ENCODE measurements at regions of chr5 and their contacts with region 1.

Region 1: DNA sequence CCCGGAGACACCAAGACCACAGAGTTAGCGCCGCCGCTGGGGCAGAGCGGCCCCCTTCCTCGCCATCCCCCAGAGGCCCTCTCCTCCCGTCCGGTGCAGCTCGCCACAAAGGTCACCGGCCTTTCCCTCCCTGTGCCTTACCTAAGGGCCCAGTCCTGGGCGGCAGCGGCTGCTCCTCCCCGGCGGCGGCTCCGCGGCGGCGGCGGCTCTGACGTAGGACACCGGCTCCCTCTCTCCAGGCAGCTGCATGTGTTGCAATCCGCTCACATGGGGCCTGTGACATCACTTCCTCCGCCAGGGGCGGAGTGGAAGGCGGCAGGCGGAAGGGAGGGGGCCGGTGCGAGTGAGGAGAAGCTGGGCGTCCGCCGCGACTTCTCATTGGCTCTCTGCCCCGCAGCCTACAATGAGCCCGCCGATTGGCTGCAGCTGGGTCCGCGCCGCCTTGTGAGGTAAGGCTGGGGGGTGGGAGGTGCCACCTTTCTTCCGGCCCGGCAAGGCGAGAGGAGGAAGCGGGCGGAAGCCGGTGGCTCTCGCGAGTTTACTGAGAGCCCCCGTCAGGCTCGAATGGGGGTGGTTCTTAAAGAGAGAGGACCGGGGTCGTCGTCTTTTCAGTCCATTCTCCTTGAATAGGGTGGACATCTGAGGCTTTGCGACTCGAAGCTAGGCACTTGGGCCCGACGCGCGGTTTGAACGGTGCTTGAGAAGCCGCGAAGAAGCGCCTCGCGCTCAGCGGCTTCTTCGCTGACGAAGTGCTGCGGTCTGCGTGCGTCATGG is at the start of gene ETF1:
- DNase-seq: peak; percentile 100
- H3K4me3 Mint-ChIP-seq: peak within 1 kb of the TSS; percentile 96
- H3K27ac Mint-ChIP-seq: peak within 1 kb of the TSS; percentile 99
- H3K4me1 Mint-ChIP-seq: peaks cover 64% of the 10 kb centered on the region
- H3K27me3 Mint-ChIP-seq: no peaks in the 10 kb centered on the region
- total RNA-seq, gene ETF1: 77.5 to 81.7 TPM

Region 2: DNA sequence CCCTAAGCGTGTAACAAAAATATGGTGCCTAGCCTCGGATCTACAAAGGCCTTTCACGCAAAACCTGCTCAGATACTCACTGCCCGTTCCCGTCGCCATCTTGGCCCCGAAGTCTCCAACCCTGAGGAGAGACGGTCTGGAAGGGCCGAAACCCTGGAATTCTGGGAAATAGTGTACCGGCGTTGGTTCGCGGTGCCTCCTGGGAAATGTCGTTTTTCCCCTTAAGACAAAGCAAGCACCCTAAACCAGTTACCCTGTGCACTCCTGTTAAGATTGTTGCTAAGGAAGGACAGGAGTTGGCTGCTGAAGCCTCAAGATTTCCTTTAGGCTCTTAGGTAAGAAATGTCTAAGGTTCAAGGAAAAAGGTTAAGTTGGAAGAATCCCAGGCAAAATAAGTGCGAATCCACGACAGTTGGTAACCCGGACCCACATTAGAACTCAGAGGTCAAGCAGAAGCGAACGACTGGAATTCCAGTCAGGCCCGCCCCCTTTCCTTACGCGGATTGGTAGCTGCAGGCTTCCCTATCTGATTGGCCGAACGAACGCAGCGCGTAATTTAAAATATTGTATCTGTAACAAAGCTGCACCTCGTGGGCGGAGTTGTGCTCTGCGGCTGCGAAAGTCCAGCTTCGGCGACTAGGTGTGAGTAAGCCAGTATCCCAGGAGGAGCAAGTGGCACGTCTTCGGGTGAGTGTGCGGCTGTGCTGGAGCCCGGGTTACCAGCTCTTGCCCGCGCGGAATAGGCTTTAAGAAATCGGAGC is 364.4 kb before region 1 on chr5 and contains the starts of genes BRD8 and KIF20A:
- CTCF ChIA-PET with region 1: no interaction called
- POLR2A ChIA-PET with region 1: interaction called, 24 read pairs
- DNase-seq: peak; percentile 94
- H3K4me3 Mint-ChIP-seq: no peak within 1 kb of the TSS
- H3K27ac Mint-ChIP-seq: no peak within 1 kb of the TSS
- H3K4me1 Mint-ChIP-seq: peaks cover 36% of the 10 kb centered on the region
- H3K27me3 Mint-ChIP-seq: no peaks in the 10 kb centered on the region
- total RNA-seq, gene BRD8: 62.9 to 72.7 TPM
- total RNA-seq, gene KIF20A: 50.7 to 55.7 TPM

Region 3: DNA sequence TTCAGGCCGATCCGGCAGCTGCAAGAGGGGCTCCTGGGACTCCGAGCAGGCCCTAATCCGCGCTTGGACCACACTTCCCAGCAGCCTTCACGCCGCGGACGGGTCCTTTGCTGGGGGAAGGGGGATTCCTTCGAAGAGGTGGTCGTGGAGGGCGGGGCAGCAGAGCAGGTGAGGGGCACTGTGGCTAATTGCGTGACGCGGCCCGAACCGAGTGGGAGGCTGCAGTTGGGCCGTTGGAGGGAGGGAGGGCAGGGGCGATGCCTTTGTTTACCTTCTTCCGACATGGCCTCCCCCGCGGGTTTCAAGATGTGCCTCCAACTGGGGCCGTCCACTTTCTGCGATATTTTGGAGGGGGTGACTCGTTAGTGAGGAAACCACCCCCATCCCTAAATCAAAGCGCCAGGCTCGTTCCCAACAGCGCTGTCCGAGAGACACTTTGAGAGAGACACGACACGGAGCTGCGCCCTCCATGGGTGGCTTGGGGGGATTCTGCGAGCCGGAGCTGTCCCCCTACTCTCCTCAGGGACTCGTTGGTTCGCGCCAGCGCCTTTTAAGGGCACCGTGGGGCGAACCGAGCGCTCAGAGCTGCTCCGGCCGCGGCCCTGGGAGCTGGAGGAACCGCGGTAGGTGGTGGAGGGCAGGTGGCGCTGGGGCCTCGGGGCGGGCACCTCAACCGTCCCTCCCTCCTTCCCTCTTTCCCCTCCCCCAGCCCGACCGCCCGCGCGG is 205.3 kb before region 1 on chr5 and contains the start of gene FAM53C:
- CTCF ChIA-PET with region 1: no interaction called
- POLR2A ChIA-PET with region 1: interaction called, 16 read pairs
- DNase-seq: peak; percentile 93
- H3K4me3 Mint-ChIP-seq: peak within 1 kb of the TSS; percentile 82
- H3K27ac Mint-ChIP-seq: peak within 1 kb of the TSS; percentile 89
- H3K4me1 Mint-ChIP-seq: peaks cover 42% of the 10 kb centered on the region
- H3K27me3 Mint-ChIP-seq: no peaks in the 10 kb centered on the region
- total RNA-seq, gene FAM53C: 21.7 to 27.1 TPM

Region 4: DNA sequence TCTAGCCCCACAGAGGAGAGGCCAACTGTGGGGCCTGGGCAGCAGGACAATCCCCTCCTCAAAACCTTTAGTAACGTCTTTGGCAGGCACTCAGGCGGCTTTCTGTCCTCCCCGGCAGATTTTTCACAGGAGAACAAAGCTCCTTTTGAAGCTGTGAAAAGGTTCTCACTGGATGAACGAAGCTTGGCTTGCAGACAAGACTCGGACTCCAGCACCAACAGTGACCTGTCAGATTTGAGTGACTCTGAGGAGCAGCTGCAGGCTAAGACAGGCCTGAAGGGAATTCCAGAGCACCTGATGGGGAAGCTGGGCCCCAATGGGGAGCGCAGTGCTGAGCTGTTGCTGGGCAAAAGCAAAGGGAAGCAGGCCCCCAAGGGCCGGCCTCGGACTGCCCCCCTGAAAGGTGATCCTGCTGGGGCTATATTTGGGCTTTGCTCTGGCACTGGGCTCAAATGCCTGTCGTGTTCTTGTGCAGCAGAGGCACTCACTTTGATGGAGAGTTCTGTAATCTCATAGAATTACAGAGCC is 151.2 kb before region 1 on chr5:
- CTCF ChIA-PET with region 1: no interaction called
- POLR2A ChIA-PET with region 1: no interaction called
- DNase-seq: no peak
- H3K4me3 Mint-ChIP-seq: no peak overlapping the region
- H3K27ac Mint-ChIP-seq: no peak overlapping the region
- H3K4me1 Mint-ChIP-seq: no peaks in the 10 kb centered on the region
- H3K27me3 Mint-ChIP-seq: no peaks in the 10 kb centered on the region

Region 5: GRCh38 chr5:138515556-138516245 is 27.4 kb before region 1 on chr5:
- CTCF ChIA-PET with region 1: interaction called, 6 read pairs
- POLR2A ChIA-PET with region 1: interaction called, 11 read pairs
- DNase-seq: no peak
- H3K4me3 Mint-ChIP-seq: no peak overlapping the region
- H3K27ac Mint-ChIP-seq: no peak overlapping the region
- H3K4me1 Mint-ChIP-seq: peaks cover 3% of the 10 kb centered on the region
- H3K27me3 Mint-ChIP-seq: no peaks in the 10 kb centered on the region

Region 6: DNA sequence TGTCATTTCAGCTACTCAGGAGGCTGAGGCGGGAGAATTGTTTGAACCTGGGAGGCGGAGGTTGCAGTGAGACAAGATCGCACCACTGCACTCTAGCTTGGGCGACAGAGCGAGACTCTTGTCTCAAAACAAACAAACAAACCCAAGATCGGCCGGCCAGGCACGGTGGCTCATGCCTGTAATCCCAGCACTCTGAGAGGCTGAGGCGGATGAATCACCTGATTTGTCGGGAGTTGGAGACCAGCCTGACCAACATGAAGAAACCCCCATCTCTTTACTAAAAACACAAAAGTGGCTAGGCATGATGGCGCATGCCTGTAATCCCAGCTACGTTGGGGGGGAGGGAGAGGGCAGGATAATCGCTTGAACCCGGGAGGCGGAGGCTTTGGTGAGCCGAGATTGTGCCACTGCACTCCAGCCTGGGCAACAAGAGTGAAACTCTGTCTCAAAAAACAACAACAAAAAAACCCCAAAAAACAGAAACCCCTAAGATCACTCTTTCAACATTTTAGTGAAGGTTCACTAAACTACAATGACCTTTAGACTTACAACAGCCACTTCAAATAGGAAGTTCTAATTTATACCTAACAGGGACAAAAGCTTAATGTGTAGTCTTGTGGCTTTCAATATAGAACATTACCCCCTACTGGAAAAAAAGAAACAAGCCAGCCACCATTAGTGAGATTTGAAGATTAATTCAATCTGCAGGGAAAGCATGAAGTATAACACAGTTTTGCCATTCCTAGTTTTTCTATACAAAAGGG is 25.1 kb after region 1 on chr5:
- CTCF ChIA-PET with region 1: interaction called, 11 read pairs
- POLR2A ChIA-PET with region 1: interaction called, 109 read pairs
- DNase-seq: no peak
- H3K4me3 Mint-ChIP-seq: no peak overlapping the region
- H3K27ac Mint-ChIP-seq: peak overlapping the region; percentile 98
- H3K4me1 Mint-ChIP-seq: peaks cover 81% of the 10 kb centered on the region
- H3K27me3 Mint-ChIP-seq: no peaks in the 10 kb centered on the region

Region 7: GRCh38 chr5:138725138-138725833 is 182.1 kb after region 1 on chr5:
- CTCF ChIA-PET with region 1: no interaction called
- POLR2A ChIA-PET with region 1: no interaction called
- DNase-seq: no peak
- H3K4me3 Mint-ChIP-seq: no peak overlapping the region
- H3K27ac Mint-ChIP-seq: no peak overlapping the region
- H3K4me1 Mint-ChIP-seq: peaks cover 20% of the 10 kb centered on the region
- H3K27me3 Mint-ChIP-seq: peaks cover 32% of the 10 kb centered on the region